G401 (cell line): ENCODE measurements at regions of chr2 and their contacts with region 1.

Region 1: GRCh38 chr2:55718165-55719008 is 24.7 kb upstream of the PNPT1 start:
- DNase-seq: peak; percentile 60

Region 2: GRCh38 chr2:55801436-55801835 is 83.0 kb after region 1 on chr2:
- in situ Hi-C with region 1: no loop called
- DNase-seq: no peak

Region 3: GRCh38 chr2:55885129-55885943 is 166.9 kb after region 1 on chr2:
- in situ Hi-C with region 1: no loop called
- DNase-seq: no peak

Region 4: DNA sequence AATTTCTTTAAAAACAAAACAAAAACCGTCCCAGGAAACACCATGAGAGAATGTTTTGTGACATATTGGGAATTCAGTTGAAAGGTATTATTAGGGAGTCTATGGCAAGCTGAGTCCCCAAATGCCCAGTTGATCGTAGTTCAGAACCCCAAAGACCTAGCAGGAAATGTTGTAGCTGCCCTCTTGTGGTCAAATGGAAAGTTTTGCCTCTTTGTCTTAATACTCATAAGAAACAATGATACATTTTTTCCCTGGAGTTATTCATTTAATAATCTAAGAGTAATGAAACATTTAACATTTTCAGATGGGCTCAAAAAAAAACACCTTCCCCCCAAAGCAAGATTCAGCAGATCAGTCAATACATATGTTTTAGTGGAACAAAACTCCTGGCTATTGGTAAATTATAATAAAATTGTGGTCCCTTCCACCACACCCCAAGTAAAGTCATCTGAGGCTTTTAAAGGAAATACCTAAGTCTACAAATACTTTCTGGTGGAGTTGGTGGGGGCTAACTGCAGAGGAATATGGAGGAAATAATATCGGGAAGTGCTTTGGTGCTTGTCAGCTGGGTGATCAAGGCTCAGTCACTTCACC is 243.0 kb after region 1 on chr2:
- in situ Hi-C with region 1: loop called (anchors 10 kb)
- DNase-seq: peak; percentile 32